ENCODE measurements at regions of chr18 and their contacts with region 1.

Region 1: GRCh38 chr18:76349067-76349715 is 145.9 kb downstream of the ZNF516 start:
- DNase-seq: peak; percentile 74
- H3K4me3 ChIP-seq: peak overlapping the region in 1 of 2 donors; percentile 8
- H3K27ac ChIP-seq: no peak overlapping the region
- H3K4me1 ChIP-seq: peaks cover 10% of the 10 kb centered on the region
- H3K27me3 ChIP-seq: no peaks in the 10 kb centered on the region
- CTCF ChIP-seq: peak; percentile 84 to 86 (median 86)
- POLR2A ChIP-seq: no peak

Region 2: GRCh38 chr18:75884728-75885127 is 464.5 kb before region 1 on chr18:
- intact Hi-C with region 1: loop called (anchors 10 kb)
- DNase-seq: no peak
- H3K4me3 ChIP-seq: no peak overlapping the region
- H3K27ac ChIP-seq: no peak overlapping the region
- H3K4me1 ChIP-seq: no peaks in the 10 kb centered on the region
- H3K27me3 ChIP-seq: no peaks in the 10 kb centered on the region
- CTCF ChIP-seq: no peak
- POLR2A ChIP-seq: no peak

Region 3: GRCh38 chr18:76259096-76259495 is 90.1 kb before region 1 on chr18:
- intact Hi-C with region 1: loop called (anchors 5 kb)
- DNase-seq: no peak
- H3K4me3 ChIP-seq: no peak overlapping the region
- H3K27ac ChIP-seq: no peak overlapping the region
- H3K4me1 ChIP-seq: no peaks in the 10 kb centered on the region
- H3K27me3 ChIP-seq: no peaks in the 10 kb centered on the region
- CTCF ChIP-seq: no peak
- POLR2A ChIP-seq: no peak

Region 4: GRCh38 chr18:76643996-76644395 is 294.8 kb after region 1 on chr18:
- intact Hi-C with region 1: no loop called
- DNase-seq: no peak
- H3K4me3 ChIP-seq: no peak overlapping the region
- H3K27ac ChIP-seq: no peak overlapping the region
- H3K4me1 ChIP-seq: no peaks in the 10 kb centered on the region
- H3K27me3 ChIP-seq: no peaks in the 10 kb centered on the region
- CTCF ChIP-seq: no peak
- POLR2A ChIP-seq: no peak